RWPE1 (cell line): ENCODE measurements at regions of chr3 and their contacts with region 1.

Region 1: DNA sequence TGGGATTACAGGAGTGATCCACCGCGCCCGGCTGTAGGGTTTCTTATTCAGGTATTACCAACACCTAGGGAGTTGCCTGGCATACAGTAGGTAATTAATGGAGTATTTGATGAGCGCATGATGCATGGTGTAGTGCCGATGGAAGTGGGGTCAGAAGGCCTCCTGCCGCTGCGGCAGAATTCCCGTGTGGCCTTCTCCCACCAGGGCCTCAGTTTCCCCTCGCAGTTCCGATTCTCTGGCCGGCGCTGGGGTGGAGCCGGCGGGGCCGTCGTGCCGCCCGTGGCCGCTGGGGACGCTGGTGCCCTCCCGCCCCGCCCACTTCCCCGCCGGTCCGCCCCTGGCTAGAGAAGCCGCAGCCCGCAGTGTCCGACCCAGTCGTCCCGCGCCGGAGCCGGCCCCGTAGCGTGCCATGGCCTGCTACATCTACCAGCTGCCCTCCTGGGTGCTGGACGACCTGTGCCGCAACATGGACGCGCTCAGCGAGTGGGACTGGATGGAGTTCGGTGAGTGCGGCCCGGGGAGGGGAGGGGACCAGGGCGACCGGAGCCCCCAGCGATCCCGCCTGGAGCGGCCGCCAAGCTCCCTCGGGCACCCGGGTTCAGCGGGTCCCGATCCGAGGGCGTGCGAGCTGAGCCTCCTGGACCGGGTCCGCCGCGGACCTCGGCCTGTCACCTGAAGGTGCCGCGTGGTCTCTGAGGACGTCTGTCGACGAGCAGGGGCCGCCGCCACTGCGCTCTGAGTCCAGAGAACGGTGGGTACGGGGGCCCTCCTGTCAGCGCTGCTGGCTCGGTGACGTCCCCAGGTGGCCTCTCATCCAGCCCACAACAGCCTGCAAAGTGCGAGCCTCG is at the start of gene IRAK2:
- DNase-seq: peak; percentile 69
- H3K27ac ChIP-seq: peak within 1 kb of the TSS; percentile 77
- CTCF ChIP-seq: peak; percentile 95

Region 2: GRCh38 chr3:9749645-9750555 is 414.9 kb before region 1 on chr3 and contains the start of gene OGG1:
- CTCF ChIA-PET with region 1: no interaction called
- POLR2A ChIA-PET with region 1: no interaction called
- DNase-seq: peak; percentile 95
- H3K27ac ChIP-seq: peak within 1 kb of the TSS; percentile 95
- CTCF ChIP-seq: no peak

Region 3: GRCh38 chr3:10223676-10224639 is 59.2 kb after region 1 on chr3:
- CTCF ChIA-PET with region 1: interaction called, 12 read pairs
- POLR2A ChIA-PET with region 1: no interaction called
- DNase-seq: no peak
- H3K27ac ChIP-seq: peak overlapping the region; percentile 51
- CTCF ChIP-seq: no peak